OCI-LY7 (cell line): ENCODE measurements at regions of chr18 and their contacts with region 1.

Region 1: GRCh38 chr18:48514786-48515185 is 24.0 kb upstream of the CTIF start:
- DNase-seq: no peak
- H3K4me3 ChIP-seq: no peak overlapping the region
- H3K27ac ChIP-seq: no peak overlapping the region
- H3K4me1 ChIP-seq: no peaks in the 10 kb centered on the region
- CTCF ChIP-seq: no peak

Region 2: GRCh38 chr18:48921305-48922225 is 406.8 kb after region 1 on chr18:
- CTCF ChIA-PET with region 1: no interaction called
- POLR2A ChIA-PET with region 1: interaction called, 11 read pairs
- intact Hi-C with region 1: no loop called
- DNase-seq: no peak
- H3K4me3 ChIP-seq: no peak overlapping the region
- H3K27ac ChIP-seq: no peak overlapping the region
- H3K4me1 ChIP-seq: peaks cover 77% of the 10 kb centered on the region
- CTCF ChIP-seq: no peak